Activated CD4-positive, alpha-beta memory T cell treated with anti-CD3 and anti-CD28 coated beads, Interleukin-2, amount 10 ng/mL, durations not matched to agents 7 days and 5 days (primary cell): ENCODE measurements at regions of chr4 and their contacts with region 1.

Region 1: GRCh38 chr4:185183619-185184281 is 20.1 kb downstream of the CFAP97 start:
- DNase-seq: peak; percentile 77
- H3K4me3 Mint-ChIP-seq: no peak overlapping the region
- H3K27ac Mint-ChIP-seq: no peak overlapping the region
- H3K4me1 Mint-ChIP-seq: peaks cover 14% of the 10 kb centered on the region
- H3K27me3 Mint-ChIP-seq: no peaks in the 10 kb centered on the region

Region 2: DNA sequence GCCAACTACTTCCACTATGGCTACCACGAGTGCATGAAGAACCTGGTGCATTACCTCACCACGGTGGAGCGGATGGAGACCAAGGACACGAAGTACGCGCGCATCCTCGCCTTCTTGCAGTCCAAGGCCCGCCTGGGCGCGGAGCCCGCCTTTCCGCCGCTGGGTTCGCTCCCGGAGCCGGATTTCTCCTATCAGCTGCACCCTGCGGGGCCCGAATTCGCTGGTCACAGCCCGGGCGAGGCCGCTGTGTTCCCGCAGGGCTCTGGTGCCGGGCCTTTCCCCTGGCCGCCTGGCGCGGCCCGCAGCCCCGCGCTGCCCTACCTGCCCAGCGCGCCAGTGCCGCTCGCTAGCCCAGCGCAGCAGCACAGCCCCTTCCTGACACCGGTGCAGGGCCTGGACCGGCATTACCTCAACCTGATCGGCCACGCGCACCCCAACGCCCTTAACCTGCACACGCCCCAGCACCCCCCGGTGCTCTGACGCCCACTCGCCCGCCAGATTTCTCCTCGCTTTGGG is 163.4 kb before region 1 on chr4:
- CTCF ChIA-PET with region 1: no interaction called
- POLR2A ChIA-PET with region 1: no interaction called
- DNase-seq: no peak
- H3K4me3 Mint-ChIP-seq: no peak overlapping the region
- H3K27ac Mint-ChIP-seq: no peak overlapping the region
- H3K4me1 Mint-ChIP-seq: peaks cover 13% of the 10 kb centered on the region
- H3K27me3 Mint-ChIP-seq: peaks cover 83% of the 10 kb centered on the region

Region 3: DNA sequence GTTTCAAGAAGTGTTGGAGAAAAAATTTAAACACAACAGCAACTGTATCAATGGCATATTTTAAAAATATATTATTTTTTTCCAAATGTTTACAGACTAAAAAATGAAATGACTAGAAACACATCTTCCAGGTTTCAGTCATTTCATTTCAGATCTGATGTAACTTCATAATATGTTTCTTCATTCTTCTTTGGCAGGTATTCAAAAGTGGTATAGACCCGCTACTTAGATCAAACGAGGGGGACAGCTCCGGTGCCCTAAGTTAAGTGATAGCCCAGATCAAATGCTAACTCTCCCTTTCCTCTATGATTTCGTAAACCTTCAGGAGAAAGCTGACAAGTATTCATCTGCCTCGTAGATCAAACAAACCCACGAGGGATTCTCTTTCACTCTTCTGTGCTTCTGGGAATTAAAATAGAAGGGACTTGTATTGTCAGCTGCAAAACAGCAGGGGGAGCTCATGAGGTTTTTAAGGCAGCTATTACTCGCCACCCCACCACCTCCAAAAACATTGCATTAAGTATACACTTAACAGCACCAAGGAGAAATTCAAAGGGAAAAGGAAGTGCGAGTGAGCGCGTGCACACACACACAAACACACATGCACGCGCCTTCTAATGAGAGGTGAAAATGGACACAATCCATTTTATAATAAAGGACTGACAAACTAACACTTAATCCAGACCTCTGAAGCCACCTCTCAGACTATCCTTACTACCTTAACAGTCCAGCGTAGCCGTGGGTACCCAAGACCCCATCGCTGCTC is 144.1 kb before region 1 on chr4:
- CTCF ChIA-PET with region 1: interaction called, 49 read pairs
- POLR2A ChIA-PET with region 1: no interaction called
- DNase-seq: peak; percentile 53
- H3K4me3 Mint-ChIP-seq: peak overlapping the region; percentile 23
- H3K27ac Mint-ChIP-seq: no peak overlapping the region
- H3K4me1 Mint-ChIP-seq: peaks cover 4% of the 10 kb centered on the region
- H3K27me3 Mint-ChIP-seq: peaks cover 15% of the 10 kb centered on the region

Region 4: GRCh38 chr4:185134307-185134869 is 49.4 kb before region 1 on chr4:
- CTCF ChIA-PET with region 1: interaction called, 18 read pairs
- POLR2A ChIA-PET with region 1: no interaction called
- DNase-seq: no peak
- H3K4me3 Mint-ChIP-seq: no peak overlapping the region
- H3K27ac Mint-ChIP-seq: no peak overlapping the region
- H3K4me1 Mint-ChIP-seq: no peaks in the 10 kb centered on the region
- H3K27me3 Mint-ChIP-seq: peaks cover 29% of the 10 kb centered on the region

Region 5: DNA sequence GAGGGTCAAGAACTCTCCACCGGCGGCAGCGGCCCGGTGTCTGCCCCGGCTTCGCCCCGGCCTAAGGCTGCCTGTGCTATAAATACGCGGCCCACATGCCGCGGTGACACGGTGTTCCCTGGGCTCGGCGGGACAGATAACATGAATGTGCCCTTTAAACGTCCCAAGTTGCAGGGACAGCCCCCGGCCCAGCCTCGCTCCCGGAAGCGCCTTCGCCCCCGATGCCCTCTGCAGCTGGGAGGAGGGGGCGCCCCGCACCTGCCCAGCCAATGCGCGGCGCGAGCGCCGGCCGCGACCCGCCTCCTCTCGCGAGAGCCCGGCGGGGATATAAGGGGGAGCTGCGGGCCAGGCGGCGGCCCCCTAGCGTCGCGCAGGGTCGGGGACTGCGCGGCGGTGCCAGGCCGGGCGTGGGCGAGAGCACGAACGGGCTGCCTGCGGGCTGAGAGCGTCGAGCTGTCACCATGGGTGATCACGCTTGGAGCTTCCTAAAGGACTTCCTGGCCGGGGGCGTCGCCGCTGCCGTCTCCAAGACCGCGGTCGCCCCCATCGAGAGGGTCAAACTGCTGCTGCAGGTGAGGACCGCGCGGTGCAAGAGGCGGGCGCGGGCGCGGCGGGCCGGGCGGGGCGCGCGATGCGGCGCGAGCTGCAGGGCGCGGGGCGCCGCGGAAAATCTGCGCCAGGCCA is 40.7 kb before region 1 on chr4 and contains the start of gene SLC25A4:
- CTCF ChIA-PET with region 1: interaction called, 10 read pairs
- POLR2A ChIA-PET with region 1: no interaction called
- DNase-seq: peak; percentile 78
- H3K4me3 Mint-ChIP-seq: peak within 1 kb of the TSS; percentile 80
- H3K27ac Mint-ChIP-seq: no peak within 1 kb of the TSS
- H3K4me1 Mint-ChIP-seq: peaks cover 12% of the 10 kb centered on the region
- H3K27me3 Mint-ChIP-seq: peaks cover 38% of the 10 kb centered on the region
- total RNA-seq, gene SLC25A4: 3.8 to 5.2 TPM

Region 6: GRCh38 chr4:185171373-185172071 is 12.2 kb before region 1 on chr4:
- CTCF ChIA-PET with region 1: interaction called, 33 read pairs
- POLR2A ChIA-PET with region 1: interaction called, 6 read pairs
- DNase-seq: no peak
- H3K4me3 Mint-ChIP-seq: no peak overlapping the region
- H3K27ac Mint-ChIP-seq: no peak overlapping the region
- H3K4me1 Mint-ChIP-seq: peaks cover 1% of the 10 kb centered on the region
- H3K27me3 Mint-ChIP-seq: no peaks in the 10 kb centered on the region

Region 7: DNA sequence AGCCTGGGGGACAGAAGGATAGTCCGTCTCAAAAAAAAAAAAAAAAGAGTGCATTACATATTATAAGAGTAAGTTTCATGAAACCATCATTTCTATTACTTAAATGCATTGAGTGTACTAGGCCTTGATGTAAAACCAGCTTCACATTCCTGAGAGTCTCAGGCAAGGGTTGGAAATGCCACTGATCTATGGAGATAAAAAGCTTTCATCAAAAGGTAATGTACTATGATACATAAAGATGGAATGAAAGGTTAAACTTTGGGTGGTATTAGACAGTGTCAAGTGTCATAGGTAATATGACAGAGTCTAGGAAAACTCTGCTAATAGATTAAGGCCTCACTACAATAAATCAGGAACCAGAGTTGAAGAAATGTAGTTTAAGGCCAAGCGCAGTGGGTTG is 12.7 kb after region 1 on chr4:
- CTCF ChIA-PET with region 1: interaction called, 21 read pairs
- POLR2A ChIA-PET with region 1: no interaction called
- DNase-seq: no peak
- H3K4me3 Mint-ChIP-seq: no peak overlapping the region
- H3K27ac Mint-ChIP-seq: no peak overlapping the region
- H3K4me1 Mint-ChIP-seq: peaks cover 24% of the 10 kb centered on the region
- H3K27me3 Mint-ChIP-seq: no peaks in the 10 kb centered on the region

Region 8: DNA sequence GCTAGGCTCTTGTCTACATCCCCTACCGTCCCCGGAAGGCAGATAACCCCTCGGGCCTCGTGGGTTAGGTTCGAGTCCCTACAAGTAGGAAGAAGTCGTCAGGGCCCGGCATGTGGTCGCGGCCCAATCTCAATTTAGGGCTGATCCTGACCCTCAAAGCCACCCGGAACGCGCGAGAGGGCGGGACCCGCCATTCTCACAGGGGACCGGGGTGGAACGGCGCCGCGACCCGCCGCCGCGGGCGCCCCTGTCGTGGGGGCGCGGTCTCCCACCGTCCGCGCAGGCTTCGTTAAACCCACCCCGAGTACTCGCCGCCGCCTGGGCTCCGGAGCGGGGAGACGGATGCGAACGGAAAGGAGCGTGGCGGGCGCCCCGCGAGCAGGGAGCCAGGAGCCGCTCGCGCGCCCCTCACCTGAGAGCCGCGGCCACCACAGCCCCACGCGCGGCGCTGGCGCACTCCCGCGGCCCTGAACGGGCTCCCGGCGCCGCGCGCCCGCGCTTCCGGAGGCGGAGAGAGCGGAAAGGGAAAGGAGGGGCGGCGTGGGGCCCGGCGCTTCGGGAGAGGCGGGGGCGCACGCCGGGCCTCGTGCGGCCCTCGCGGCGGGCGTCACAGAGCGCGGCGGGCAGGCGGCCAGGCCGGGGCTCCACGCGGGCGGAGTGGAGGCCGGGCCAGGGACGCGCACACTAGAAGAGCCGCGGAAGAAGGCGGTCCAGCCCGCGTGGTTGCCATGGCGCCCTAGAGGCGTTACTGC is 19.9 kb after region 1 on chr4 and contains the start of gene CFAP97:
- CTCF ChIA-PET with region 1: interaction called, 13 read pairs
- POLR2A ChIA-PET with region 1: interaction called, 4 read pairs
- DNase-seq: peak; percentile 76
- H3K4me3 Mint-ChIP-seq: peak within 1 kb of the TSS; percentile 91
- H3K27ac Mint-ChIP-seq: peak within 1 kb of the TSS; percentile 96
- H3K4me1 Mint-ChIP-seq: peaks cover 52% of the 10 kb centered on the region
- H3K27me3 Mint-ChIP-seq: no peaks in the 10 kb centered on the region
- total RNA-seq, gene CFAP97: 31.9 to 32.1 TPM

Region 9: DNA sequence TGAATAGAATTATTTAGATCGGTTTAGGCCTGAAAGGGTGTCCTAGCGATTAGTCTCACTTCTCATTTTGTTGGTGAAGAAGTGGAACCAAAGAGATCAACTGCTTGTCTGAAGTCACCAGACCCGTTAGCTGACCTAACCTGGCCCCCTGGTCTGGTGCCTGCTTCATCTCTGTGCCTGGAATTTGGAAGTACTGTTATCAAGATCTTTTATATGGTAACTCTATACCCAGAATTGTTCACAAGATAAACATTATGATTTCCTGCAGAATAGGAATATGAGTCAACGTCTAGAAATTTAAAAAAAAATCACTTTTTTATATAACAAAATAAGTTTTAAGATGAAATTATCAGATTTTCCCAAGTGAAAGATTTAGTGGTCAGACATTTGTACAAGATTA is 174.8 kb after region 1 on chr4:
- CTCF ChIA-PET with region 1: no interaction called
- POLR2A ChIA-PET with region 1: no interaction called
- DNase-seq: no peak
- H3K4me3 Mint-ChIP-seq: no peak overlapping the region
- H3K27ac Mint-ChIP-seq: no peak overlapping the region
- H3K4me1 Mint-ChIP-seq: peaks cover 4% of the 10 kb centered on the region
- H3K27me3 Mint-ChIP-seq: no peaks in the 10 kb centered on the region